Kidney (tissue), 22 donors: ENCODE measurements at regions of chr1 and their contacts with region 1.

Region 1: DNA sequence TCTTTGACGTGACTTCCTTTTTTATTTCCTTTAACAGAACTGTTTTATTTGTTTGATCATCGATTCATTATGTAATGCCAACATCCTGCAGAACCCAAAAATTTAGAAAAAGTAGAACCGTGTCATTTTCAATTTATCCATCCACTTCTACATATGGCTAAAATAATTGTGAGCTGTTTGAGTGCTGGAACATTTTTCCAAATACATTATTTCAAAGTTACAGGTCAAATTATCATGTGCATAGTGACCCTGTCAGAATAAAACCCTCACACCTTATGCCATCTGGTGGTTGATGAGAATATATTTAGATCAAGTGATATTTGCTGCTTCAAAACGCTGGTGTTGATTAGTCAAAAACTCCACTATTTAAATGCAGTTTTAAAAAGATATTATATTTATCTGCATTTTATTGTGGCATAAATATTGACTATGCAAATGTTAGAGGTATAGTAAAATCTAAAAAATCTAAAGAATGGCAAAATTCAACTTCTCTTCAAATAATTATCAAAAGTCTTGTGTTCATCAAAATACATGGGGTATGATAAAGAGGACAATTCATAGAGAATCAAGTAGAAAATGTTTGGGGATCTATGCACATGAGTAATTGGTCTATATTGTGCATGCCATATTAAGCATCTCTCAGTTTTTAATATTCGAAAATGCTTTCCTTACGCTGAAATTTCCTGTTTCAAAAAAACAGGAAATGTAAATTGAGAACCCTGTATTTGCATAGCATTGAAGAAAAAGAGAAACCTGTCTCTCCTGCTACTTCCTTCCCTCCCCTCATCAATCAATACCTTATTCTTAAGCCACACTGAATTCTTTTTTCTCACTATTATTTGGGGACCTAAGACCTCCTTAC is 39.7 kb downstream of the UBE2U start:
- DNase-seq: peak in 2 of 5 donors; percentile 48 to 67
- H3K4me3 ChIP-seq: no peak overlapping the region
- H3K27ac ChIP-seq: no peak overlapping the region
- H3K4me1 ChIP-seq: peaks cover 0 to 3% (median 0%) of the 10 kb centered on the region in 3 donors
- H3K27me3 ChIP-seq: no peaks in the 10 kb centered on the region
- CTCF ChIP-seq: peak; percentile 51

Region 2: DNA sequence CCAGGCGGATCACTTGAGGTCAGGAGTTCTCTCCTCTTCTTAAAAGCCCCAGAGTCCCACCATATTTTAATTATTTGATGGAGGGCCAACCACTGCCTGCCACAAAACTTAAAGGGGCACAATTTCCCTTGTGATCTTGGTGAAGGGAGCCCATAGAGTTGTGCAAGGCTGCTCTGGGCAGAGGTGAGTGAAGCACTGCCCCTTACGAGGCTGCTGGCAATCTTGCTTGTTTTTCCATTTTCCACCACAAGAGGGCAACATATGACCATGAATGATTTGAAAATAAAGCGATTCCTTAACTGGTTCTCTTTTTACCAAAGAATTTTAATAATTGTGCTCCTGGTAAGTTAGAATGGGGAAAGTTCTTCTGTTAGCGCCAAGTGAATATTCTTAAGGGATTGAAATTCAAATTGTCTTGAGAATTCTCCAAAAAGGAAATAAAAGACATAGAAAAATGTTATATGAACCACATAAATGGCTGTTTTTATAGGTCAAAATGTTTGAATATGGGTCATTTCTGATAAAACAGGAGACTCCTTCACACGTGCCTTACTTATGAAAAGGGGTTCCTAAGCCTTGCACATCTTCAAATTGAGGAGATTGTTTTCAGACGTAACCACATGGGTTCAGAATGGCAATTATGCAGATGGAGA is 627.2 kb before region 1 on chr1:
- intact Hi-C with region 1: loop called (anchors 5 kb)
- DNase-seq: peak in 4 of 5 donors; percentile 53 to 88 (median 74)
- H3K4me3 ChIP-seq: no peak overlapping the region
- H3K27ac ChIP-seq: no peak overlapping the region
- H3K4me1 ChIP-seq: peaks cover 0 to 3% (median 0%) of the 10 kb centered on the region in 3 donors
- H3K27me3 ChIP-seq: no peaks in the 10 kb centered on the region
- CTCF ChIP-seq: peak; percentile 91

Region 3: GRCh38 chr1:63674238-63674864 is 568.8 kb before region 1 on chr1:
- intact Hi-C with region 1: loop called (anchors 10 kb)
- DNase-seq: peak; percentile 75 to 95 (median 83)
- H3K4me3 ChIP-seq: no peak overlapping the region
- H3K27ac ChIP-seq: no peak overlapping the region
- H3K4me1 ChIP-seq: peaks cover 0 to 8% (median 0%) of the 10 kb centered on the region in 3 donors
- H3K27me3 ChIP-seq: no peaks in the 10 kb centered on the region
- CTCF ChIP-seq: peak; percentile 68

Region 4: GRCh38 chr1:64292399-64292798 is 49.3 kb after region 1 on chr1:
- intact Hi-C with region 1: no loop called
- DNase-seq: no peak
- H3K4me3 ChIP-seq: no peak overlapping the region
- H3K27ac ChIP-seq: no peak overlapping the region
- H3K4me1 ChIP-seq: no peaks in the 10 kb centered on the region
- H3K27me3 ChIP-seq: no peaks in the 10 kb centered on the region
- CTCF ChIP-seq: no peak

Region 5: DNA sequence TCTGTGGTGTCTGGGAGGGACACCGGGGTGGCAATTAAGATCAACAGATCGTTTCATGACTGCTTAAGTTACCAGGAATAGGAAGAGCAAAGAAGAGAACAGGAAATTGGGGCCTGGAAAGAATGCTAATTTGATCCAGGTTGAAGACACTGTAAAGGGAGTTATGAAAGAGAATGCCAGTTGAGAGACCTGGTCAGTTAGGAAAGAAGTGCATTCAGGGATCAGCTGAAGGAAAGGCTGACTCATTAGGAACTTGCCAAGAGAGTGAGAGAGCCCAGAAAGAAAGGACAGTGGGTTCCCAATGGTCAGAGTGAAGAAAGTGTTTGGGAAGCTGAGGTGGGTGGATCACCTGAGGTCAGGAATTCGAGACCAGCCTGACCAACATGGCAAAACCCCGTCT is 79.9 kb after region 1 on chr1:
- intact Hi-C with region 1: no loop called
- DNase-seq: peak in 2 of 5 donors; percentile 20 to 22
- H3K4me3 ChIP-seq: no peak overlapping the region
- H3K27ac ChIP-seq: no peak overlapping the region
- H3K4me1 ChIP-seq: no peaks in the 10 kb centered on the region
- H3K27me3 ChIP-seq: no peaks in the 10 kb centered on the region
- CTCF ChIP-seq: no peak